Aorta (tissue), 5 donors: ENCODE measurements at regions of chr4 and their contacts with region 1.

Region 1: DNA sequence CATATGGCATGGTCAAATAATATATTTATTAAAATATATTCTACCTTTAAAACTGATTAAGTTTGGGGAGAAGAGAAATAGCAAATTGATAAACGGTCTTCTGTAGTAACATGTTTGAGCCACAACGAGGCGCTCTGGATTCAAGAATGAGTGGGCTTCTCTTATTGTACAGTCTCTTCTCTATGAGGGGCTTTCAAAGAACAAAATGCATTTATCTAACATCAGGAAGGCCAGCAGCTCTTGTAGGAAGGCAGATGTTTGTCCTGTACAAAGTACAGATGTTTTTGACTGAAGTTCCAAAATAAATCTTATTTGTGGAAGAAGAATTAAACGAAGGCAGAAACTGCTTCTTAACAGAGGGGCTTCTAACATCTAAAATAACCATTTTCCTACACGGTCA is 153.6 kb downstream of the RASL11B start:
- DNase-seq: no peak
- ATAC-seq: no peak
- H3K4me3 ChIP-seq: no peak overlapping the region
- H3K27ac ChIP-seq: no peak overlapping the region
- H3K4me1 ChIP-seq: peaks cover 6 to 31% of the 10 kb centered on the region in 2 donors
- H3K27me3 ChIP-seq: no peaks in the 10 kb centered on the region

Region 2: DNA sequence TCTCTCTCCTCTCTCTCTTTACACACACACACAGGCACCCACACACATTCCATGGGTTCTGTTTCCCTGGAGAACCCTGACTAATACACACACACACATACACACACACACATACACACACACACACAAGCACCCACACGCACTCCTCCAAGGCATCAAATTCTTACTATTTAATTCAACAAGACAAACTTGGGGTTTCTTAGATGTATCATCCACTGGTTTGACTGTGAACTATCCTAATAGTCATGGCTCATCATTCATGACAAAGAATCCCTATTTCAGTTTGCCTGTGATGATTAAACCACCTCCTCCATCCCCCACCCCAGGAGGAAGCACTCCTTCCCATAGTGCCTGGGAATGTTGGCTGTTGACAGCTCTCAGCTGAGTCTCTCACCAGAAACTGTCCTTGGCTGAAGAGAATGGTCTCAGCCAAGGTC is 454.8 kb before region 1 on chr4:
- intact Hi-C with region 1: no loop called
- DNase-seq: no peak
- ATAC-seq: no peak
- H3K4me3 ChIP-seq: no peak overlapping the region
- H3K27ac ChIP-seq: no peak overlapping the region
- H3K4me1 ChIP-seq: no peaks in the 10 kb centered on the region
- H3K27me3 ChIP-seq: peaks cover 0 to 1% of the 10 kb centered on the region in 2 donors

Region 3: GRCh38 chr4:52824603-52825459 is 190.8 kb before region 1 on chr4:
- intact Hi-C with region 1: no loop called
- DNase-seq: no peak
- ATAC-seq: peak; percentile 36
- H3K4me3 ChIP-seq: no peak overlapping the region
- H3K27ac ChIP-seq: no peak overlapping the region
- H3K4me1 ChIP-seq: no peaks in the 10 kb centered on the region
- H3K27me3 ChIP-seq: peaks cover 0 to 1% of the 10 kb centered on the region in 2 donors

Region 4: GRCh38 chr4:53055274-53055673 is 39.6 kb after region 1 on chr4:
- intact Hi-C with region 1: loop called in 1 of 2 experiments (anchors 5 kb)
- DNase-seq: no peak
- ATAC-seq: peak; percentile 23
- H3K4me3 ChIP-seq: no peak overlapping the region
- H3K27ac ChIP-seq: peak overlapping the region; percentile 36 to 97
- H3K4me1 ChIP-seq: peaks cover 0 to 6% of the 10 kb centered on the region in 2 donors
- H3K27me3 ChIP-seq: no peaks in the 10 kb centered on the region

Region 5: DNA sequence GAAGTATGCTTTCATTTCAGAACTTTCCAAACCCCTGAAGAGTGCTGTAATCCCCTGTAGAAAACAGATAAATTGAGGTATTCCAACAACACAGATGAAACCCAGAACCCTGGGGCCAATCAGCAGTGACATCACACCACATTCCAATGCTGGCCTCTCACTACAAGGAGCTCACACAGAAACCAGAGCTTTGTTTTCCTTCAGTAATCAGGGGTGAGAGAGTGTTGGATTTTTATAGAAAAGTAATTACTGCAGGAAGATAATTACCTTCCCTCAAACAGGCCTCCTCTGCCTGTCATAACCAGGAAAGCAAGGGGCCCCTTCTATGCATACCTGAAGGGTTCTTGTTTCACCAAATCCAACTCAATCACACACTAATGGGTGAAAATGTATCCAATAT is 104.0 kb after region 1 on chr4:
- intact Hi-C with region 1: loop called (anchors 10 kb)
- DNase-seq: no peak
- ATAC-seq: no peak
- H3K4me3 ChIP-seq: no peak overlapping the region
- H3K27ac ChIP-seq: peak overlapping the region in 1 of 2 donors; percentile 14
- H3K4me1 ChIP-seq: peaks cover 0 to 3% of the 10 kb centered on the region in 2 donors
- H3K27me3 ChIP-seq: no peaks in the 10 kb centered on the region

Region 6: GRCh38 chr4:53169695-53170617 is 154.3 kb after region 1 on chr4:
- intact Hi-C with region 1: no loop called
- DNase-seq: no peak
- ATAC-seq: no peak
- H3K4me3 ChIP-seq: no peak overlapping the region
- H3K27ac ChIP-seq: no peak overlapping the region
- H3K4me1 ChIP-seq: no peaks in the 10 kb centered on the region
- H3K27me3 ChIP-seq: no peaks in the 10 kb centered on the region

Region 7: DNA sequence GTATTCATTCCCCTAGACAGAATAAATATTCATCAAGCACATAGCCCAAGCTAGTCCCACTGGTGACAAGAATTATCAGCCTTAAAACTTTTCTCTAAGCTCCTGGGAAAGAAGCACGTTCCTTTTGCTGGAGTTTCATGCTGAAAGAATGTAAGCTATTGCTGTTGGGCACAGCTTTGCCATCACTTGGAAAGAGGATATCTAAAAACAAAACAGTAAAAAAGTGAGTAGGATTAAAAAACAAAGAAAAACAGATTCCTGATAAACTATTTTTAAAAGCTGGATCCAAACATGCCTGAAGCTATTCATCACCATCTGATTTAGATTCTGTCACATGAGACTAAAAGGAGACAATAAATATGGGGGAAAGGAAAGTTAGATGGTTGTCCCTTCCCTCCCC is 173.3 kb after region 1 on chr4:
- intact Hi-C with region 1: loop called (anchors 2 to 5 kb)
- DNase-seq: no peak
- ATAC-seq: peak; percentile 28
- H3K4me3 ChIP-seq: no peak overlapping the region
- H3K27ac ChIP-seq: peak overlapping the region; percentile 82 to 88
- H3K4me1 ChIP-seq: peaks cover 0 to 7% of the 10 kb centered on the region in 2 donors
- H3K27me3 ChIP-seq: no peaks in the 10 kb centered on the region

Region 8: DNA sequence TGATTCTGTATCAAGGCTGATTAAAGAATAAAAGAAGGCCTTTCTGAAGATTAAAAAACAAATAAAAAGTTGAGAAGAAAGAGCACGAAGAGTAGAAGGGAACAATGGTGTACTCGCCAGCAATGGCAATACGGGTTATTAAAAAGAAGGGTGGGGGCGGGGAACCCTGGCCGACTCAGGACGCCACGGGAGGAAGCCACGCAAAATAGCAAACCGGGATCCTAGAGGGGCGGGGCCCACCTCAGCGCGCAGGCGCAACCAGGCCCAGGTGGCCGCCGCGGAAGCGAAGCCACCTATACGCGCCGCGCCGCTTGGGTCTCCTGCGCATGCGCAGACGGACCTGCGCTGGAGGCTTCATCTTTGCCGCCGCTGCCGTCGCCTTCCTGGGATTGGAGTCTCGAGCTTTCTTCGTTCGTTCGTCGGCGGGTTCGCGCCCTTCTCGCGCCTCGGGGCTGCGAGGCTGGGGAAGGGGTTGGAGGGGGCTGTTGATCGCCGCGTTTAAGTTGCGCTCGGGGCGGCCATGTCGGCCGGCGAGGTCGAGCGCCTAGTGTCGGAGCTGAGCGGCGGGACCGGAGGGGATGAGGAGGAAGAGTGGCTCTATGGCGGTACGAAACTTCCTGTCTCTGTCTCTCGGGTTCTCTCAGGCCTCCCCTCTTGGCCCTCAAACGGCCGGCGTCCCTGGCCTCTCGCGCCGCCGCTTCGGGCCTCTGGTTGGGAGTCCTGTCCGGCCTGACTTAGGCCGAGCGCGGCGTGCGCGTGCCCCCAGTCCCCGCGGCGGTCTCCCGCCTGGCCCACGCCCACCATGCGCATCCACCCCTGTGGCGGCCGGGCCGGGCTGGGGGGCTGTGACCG is 361.9 kb after region 1 on chr4 and contains the start of gene FIP1L1:
- intact Hi-C with region 1: loop called (anchors 10 kb)
- DNase-seq: peak; percentile 96 to 98
- ATAC-seq: peak; percentile 99
- H3K4me3 ChIP-seq: peak within 1 kb of the TSS; percentile 36 to 98
- H3K27ac ChIP-seq: peak within 1 kb of the TSS in 1 of 2 donors; percentile 34
- H3K4me1 ChIP-seq: no peaks in the 10 kb centered on the region
- H3K27me3 ChIP-seq: no peaks in the 10 kb centered on the region
- total RNA-seq, gene FIP1L1: 42.6 to 49.8 TPM

Region 9: GRCh38 chr4:53714236-53715140 is 698.8 kb after region 1 on chr4:
- intact Hi-C with region 1: loop called in 1 of 2 experiments (anchors 10 kb)
- DNase-seq: no peak
- ATAC-seq: no peak
- H3K4me3 ChIP-seq: no peak overlapping the region
- H3K27ac ChIP-seq: peak overlapping the region in 1 of 2 donors; percentile 71
- H3K4me1 ChIP-seq: peaks cover 3 to 7% of the 10 kb centered on the region in 2 donors
- H3K27me3 ChIP-seq: no peaks in the 10 kb centered on the region

Region 10: DNA sequence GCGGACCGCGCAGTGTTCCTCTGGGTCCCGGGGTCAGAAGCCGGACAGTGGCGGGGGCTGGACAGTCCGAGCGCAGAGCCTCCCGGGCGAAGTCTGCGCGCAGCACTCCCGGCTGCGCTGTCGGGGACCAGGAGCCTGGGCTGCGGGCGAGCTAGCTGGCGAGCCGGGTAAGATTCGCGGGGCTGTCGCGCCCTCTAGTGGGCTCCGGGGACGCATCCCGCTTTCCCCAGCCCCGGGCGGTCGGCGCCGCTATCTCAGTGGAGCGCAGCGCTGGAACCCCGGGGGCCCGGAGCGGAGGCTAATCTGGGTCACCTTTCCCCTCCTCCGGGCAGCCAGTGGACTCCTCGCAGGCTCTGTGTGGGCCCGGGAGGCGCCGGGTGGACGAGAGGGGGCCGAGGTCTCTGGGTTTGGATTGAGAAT is 1217.6 kb after region 1 on chr4:
- intact Hi-C with region 1: loop called (anchors 5 kb)
- DNase-seq: peak; percentile 91 to 97
- ATAC-seq: peak; percentile 91
- H3K4me3 ChIP-seq: peak overlapping the region; percentile 34 to 71
- H3K27ac ChIP-seq: peak overlapping the region in 1 of 2 donors; percentile 85
- H3K4me1 ChIP-seq: no peaks in the 10 kb centered on the region
- H3K27me3 ChIP-seq: no peaks in the 10 kb centered on the region